ENCODE measurements at regions of chr7 and their contacts with region 1.

Region 1: GRCh38 chr7:50418086-50418515 is 32.0 kb downstream of the FIGNL1 start:
- DNase-seq: peak; percentile 86
- ATAC-seq: peak; percentile 100
- H3K4me3 ChIP-seq: no peak overlapping the region
- H3K27ac ChIP-seq: no peak overlapping the region
- H3K4me1 ChIP-seq: no peaks in the 10 kb centered on the region
- H3K27me3 ChIP-seq: peaks cover 4% of the 10 kb centered on the region; the same call in 1 of the 2 replicates
- CTCF ChIP-seq: peak; percentile 92

Region 2: GRCh38 chr7:50092579-50093491 is 325.3 kb before region 1 on chr7 and contains the start of gene ZPBP:
- CTCF ChIA-PET with region 1: interaction called, 8 read pairs
- POLR2A ChIA-PET with region 1: no interaction called
- intact Hi-C with region 1: loop called (anchors 1 kb)
- DNase-seq: peak; percentile 67
- ATAC-seq: peak; percentile 45; the same call in 1 of the 2 replicates
- H3K4me3 ChIP-seq: peak within 1 kb of the TSS; percentile 51
- H3K27ac ChIP-seq: no peak within 1 kb of the TSS
- H3K4me1 ChIP-seq: no peaks in the 10 kb centered on the region
- H3K27me3 ChIP-seq: peaks cover 25% of the 10 kb centered on the region
- CTCF ChIP-seq: peak; percentile 84
- total RNA-seq, gene ZPBP: not detected in 2 replicates

Region 3: DNA sequence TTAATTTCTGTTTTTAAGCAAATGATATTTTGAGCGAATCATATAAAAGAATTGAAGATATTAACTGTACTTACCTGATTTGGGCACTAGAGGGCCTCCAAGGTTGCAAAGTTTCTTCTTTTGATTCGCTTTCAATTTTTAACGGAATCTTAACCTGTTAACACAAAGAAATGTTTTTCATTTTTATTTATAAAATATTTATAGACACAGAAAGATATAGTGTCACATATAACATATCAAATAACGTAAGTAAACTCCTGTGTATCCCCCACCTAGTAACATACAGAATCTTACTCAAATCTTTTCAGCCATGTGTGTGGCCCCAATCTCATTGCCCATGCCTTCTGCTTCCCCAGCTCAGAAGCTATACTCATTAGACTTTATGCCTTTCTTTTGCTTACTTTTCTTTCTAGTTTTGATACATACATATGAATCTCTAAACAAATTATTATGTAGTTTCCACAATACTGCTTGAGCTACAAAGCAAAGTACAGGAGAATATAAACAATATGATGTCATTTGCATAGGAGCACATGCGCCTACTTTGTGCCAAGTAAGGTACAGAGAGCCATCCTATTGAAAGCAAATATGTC is 275.6 kb before region 1 on chr7:
- CTCF ChIA-PET with region 1: interaction called, 4 read pairs
- POLR2A ChIA-PET with region 1: no interaction called
- intact Hi-C with region 1: loop called (anchors 1 kb)
- DNase-seq: peak; percentile 59
- ATAC-seq: no peak
- H3K4me3 ChIP-seq: no peak overlapping the region
- H3K27ac ChIP-seq: no peak overlapping the region
- H3K4me1 ChIP-seq: no peaks in the 10 kb centered on the region
- H3K27me3 ChIP-seq: peaks cover 16% of the 10 kb centered on the region
- CTCF ChIP-seq: peak; percentile 63

Region 4: DNA sequence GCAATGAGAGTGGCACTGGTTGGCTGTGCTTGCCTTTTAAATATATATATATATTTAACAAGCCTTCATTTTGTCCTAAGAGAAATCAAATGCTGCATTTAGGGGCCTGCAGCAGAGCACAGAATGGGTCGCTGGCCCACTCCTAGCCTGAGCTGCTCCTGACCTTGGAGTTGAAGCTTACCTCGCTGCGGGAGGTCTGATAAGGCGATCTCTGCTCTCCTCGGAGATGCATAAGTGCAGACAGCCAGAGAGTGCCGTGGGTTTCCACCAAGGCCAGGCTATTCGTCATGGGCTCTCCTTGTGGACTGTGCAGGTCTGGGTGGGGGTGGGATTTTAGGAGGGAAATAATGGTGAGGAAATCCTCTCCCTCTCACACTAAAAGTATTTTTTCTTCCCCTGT is 213.1 kb before region 1 on chr7:
- CTCF ChIA-PET with region 1: interaction called, 5 read pairs
- POLR2A ChIA-PET with region 1: interaction called, 4 read pairs
- intact Hi-C with region 1: loop called (anchors 1 kb)
- DNase-seq: no peak
- ATAC-seq: no peak
- H3K4me3 ChIP-seq: no peak overlapping the region
- H3K27ac ChIP-seq: no peak overlapping the region
- H3K4me1 ChIP-seq: no peaks in the 10 kb centered on the region
- H3K27me3 ChIP-seq: peaks cover 3% of the 10 kb centered on the region; the same call in 1 of the 2 replicates
- CTCF ChIP-seq: no peak

Region 5: DNA sequence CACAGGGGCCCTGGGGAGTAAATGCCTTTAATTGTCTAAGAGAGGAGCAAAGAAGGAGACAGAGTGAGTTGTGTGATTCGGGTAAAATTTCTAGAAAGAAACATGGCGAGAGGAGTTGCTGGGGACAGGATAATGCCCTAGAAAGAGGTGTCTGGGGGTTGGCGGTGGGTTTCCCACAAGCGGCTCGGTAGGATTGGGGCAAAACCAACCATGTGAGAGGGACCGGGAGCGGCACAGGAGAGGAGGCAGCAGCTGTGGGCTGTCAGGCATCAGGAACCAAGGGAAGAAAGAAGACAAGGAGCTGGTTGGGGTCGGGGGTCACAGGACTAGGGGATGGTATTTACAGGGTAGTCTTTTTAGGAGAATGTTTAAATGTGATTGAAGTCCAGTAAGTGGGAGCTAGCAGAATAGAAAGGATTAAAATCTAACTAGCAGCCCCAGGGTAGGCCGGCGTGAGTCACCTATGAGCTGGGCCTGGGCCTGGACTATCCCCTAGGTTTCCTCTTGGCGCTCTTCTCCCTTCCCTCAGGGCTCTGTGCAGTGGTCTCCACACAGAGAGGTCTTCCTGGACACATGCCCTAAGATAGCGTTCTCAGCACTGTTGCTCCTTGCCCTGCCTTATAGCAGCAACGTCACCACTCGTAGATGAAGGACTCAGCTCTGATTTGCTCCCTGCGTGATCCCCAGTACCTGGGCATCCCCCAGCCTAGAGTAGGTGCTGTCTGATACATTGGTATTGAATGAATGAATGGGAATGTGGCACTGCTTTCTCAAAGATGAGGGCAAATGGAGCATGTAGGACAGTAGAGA is 81.0 kb before region 1 on chr7:
- CTCF ChIA-PET with region 1: interaction called, 11 read pairs
- POLR2A ChIA-PET with region 1: no interaction called
- intact Hi-C with region 1: no loop called
- DNase-seq: no peak
- ATAC-seq: no peak
- H3K4me3 ChIP-seq: no peak overlapping the region
- H3K27ac ChIP-seq: no peak overlapping the region
- H3K4me1 ChIP-seq: no peaks in the 10 kb centered on the region
- H3K27me3 ChIP-seq: peaks cover 54% of the 10 kb centered on the region
- CTCF ChIP-seq: no peak

Region 6: DNA sequence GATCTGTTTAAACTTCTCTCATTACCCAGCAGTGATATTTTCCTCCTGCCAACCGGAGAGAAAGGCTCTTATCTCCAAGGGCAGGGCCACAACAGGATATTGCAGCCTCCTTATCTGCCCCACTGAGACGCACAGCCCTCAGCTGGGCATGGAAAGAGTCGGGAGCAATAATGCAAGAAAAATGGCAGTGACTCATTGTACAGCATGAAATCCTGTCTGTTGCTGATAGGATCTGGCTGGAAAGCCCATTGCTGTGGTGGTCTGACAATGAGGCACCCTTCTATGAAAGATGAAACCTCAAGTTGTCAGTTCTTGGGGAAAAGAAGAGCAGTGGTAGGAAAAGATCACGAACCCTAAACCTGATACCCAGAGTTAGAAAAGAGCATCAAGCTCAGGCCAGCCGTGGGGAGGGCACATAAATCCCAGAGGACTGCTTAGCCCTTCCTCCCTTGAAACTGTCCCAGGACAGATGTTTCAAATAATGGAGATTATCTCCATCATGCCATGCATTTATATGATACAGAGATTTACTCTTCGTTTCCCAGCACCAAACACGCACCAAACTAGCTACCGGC is 79.1 kb after region 1 on chr7:
- CTCF ChIA-PET with region 1: no interaction called
- POLR2A ChIA-PET with region 1: no interaction called
- intact Hi-C with region 1: no loop called
- DNase-seq: no peak
- ATAC-seq: no peak
- H3K4me3 ChIP-seq: no peak overlapping the region
- H3K27ac ChIP-seq: no peak overlapping the region
- H3K4me1 ChIP-seq: no peaks in the 10 kb centered on the region
- H3K27me3 ChIP-seq: peaks cover 15% of the 10 kb centered on the region; the same call in 1 of the 2 replicates
- CTCF ChIP-seq: no peak

Measured in PC-3 (cell line).